ENCODE measurements at regions of chr5 and their contacts with region 1.

Region 1: DNA sequence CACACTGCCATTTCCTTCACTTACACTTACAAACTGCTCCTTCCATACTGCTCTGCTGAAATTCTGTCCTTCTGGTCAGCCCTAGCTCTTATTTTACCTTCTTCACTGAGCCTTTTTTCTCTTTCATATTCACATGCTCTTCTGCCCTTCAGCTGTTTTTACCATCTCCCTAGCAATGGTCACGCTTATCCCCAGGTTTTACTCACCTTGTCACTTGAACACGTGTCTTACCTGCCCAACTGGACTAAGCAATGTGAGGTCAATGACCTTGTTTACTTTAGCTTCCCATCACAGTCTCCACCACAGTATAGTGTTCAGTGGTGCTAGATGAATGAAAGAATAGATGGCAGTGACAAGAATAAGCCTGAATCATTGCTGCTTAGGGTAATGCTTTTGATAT is 11.5 kb downstream of the GRIA1 start:
- DNase-seq: no peak

Region 2: DNA sequence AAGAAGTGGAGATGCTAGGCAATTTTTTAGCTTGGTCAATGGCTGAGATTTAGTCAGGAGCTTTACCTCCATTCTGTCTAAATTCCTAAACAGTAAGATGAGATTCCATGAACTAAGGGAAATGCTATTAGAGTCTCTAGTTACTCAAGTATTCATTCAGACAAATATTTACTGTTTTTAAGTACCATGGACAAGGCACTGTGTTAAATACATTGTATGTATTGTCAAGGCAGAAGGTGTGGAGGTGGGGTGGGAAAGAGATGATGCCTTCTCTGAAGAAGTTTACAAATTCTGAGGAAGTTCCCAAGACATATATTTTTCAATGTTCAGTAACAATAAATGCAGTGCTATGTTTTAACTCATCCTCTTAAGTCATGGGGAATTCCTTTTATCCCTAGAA is 637.0 kb before region 1 on chr5:
- intact Hi-C with region 1: no loop called
- DNase-seq: no peak

Region 3: DNA sequence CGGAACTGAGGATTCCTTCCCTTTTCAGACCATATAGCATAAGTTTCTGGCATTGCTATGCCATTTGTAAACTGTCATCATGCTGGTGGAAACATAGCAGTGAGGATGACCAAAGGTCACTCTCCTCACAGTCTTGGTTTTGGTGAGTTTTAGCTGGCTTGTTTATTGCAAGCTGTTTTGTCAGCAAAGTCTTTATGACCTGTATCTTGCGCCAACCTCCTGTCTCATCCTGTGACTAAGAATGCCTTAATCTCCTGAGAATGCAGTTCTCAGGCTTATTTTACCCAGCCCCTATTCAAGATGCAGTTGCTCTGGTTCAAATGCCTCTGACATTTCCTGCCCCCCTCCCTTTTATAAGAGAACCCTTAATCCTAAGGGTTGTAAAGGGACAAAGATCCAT is 38.2 kb before region 1 on chr5:
- intact Hi-C with region 1: no loop called
- DNase-seq: no peak

Region 4: DNA sequence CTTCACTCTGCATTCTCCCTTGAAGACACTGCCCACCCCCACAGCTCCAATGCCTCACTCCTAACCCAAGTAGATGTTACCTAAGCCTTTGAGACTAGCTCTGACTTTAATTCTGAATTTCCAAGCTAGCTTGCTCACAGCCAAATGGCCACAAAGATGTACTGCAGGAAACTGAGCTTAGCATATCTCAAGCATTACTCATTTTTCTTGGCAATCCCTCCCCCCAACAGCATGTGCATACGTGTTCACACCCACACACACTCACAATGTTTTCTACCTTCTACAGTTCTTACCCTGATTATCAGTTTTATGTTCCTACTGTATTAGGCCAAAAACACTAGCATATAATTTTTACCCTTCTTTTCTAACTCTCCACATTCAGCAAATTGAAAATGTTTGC is 25.2 kb before region 1 on chr5:
- intact Hi-C with region 1: loop called in 1 of 2 experiments (anchors 2 kb)
- DNase-seq: no peak

Region 5: DNA sequence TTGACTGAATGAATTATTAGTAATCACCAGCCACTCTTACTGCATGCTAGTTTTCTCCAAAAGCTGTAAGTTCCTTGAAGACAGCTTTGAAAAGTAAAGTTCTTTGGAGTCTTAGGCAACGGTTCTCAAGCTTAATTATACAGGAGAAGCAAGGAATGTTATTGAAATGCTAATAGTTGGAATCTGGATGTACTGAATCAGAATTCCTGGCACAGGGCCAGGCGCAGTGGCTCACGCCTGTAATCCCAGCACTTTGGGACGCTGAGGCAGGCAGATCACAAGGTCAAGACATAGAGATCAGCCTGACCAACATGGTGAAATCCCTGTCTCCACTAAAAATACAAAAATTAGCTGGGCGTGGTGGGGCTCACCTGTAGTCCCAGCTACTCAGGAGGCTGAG is 21.8 kb after region 1 on chr5:
- intact Hi-C with region 1: loop called in 1 of 2 experiments (anchors 1 kb)
- DNase-seq: peak; percentile 82